ENCODE measurements at regions of chr3 and their contacts with region 1.

Region 1: GRCh38 chr3:62939707-62940106 is 64.5 kb upstream of the CADPS start:
- DNase-seq: no peak
- ATAC-seq: no peak
- H3K4me3 ChIP-seq: no peak overlapping the region
- H3K4me3 Mint-ChIP-seq: no peak overlapping the region
- H3K27ac ChIP-seq: no peak overlapping the region
- H3K27ac Mint-ChIP-seq: no peak overlapping the region
- H3K4me1 ChIP-seq: no peaks in the 10 kb centered on the region
- H3K4me1 Mint-ChIP-seq: no peaks in the 10 kb centered on the region
- H3K27me3 ChIP-seq: no peaks in the 10 kb centered on the region
- H3K27me3 Mint-ChIP-seq: no peaks in the 10 kb centered on the region
- CTCF ChIP-seq: no peak

Region 2: DNA sequence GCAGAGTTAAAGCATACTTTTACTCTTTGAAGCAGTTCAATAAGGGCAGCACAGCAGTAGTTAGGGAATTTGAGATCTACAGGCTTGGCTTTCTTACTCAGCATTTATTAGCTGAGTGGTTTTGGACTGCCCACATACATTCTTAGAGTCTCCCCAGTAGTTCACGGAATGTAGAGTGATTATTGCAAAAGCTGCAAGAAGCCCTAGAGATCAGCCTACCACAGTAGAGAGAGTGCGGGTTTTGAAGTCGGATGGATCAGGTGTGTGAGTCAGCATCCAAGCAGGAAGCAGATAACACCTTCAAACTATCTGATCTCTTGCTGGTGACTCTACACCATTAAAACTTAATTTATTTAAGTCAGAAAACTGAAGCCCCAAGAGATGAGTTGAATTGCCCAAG is 510.3 kb after region 1 on chr3:
- CTCF ChIA-PET with region 1: no interaction called
- POLR2A ChIA-PET with region 1: no interaction called
- intact Hi-C with region 1: loop called in 1 of 2 experiments (anchors 5 kb)
- DNase-seq: no peak
- ATAC-seq: no peak
- H3K4me3 ChIP-seq: no peak overlapping the region
- H3K4me3 Mint-ChIP-seq: no peak overlapping the region
- H3K27ac ChIP-seq: no peak overlapping the region
- H3K27ac Mint-ChIP-seq: no peak overlapping the region
- H3K4me1 ChIP-seq: no peaks in the 10 kb centered on the region
- H3K4me1 Mint-ChIP-seq: no peaks in the 10 kb centered on the region
- H3K27me3 ChIP-seq: no peaks in the 10 kb centered on the region
- H3K27me3 Mint-ChIP-seq: no peaks in the 10 kb centered on the region
- CTCF ChIP-seq: no peak

Region 3: DNA sequence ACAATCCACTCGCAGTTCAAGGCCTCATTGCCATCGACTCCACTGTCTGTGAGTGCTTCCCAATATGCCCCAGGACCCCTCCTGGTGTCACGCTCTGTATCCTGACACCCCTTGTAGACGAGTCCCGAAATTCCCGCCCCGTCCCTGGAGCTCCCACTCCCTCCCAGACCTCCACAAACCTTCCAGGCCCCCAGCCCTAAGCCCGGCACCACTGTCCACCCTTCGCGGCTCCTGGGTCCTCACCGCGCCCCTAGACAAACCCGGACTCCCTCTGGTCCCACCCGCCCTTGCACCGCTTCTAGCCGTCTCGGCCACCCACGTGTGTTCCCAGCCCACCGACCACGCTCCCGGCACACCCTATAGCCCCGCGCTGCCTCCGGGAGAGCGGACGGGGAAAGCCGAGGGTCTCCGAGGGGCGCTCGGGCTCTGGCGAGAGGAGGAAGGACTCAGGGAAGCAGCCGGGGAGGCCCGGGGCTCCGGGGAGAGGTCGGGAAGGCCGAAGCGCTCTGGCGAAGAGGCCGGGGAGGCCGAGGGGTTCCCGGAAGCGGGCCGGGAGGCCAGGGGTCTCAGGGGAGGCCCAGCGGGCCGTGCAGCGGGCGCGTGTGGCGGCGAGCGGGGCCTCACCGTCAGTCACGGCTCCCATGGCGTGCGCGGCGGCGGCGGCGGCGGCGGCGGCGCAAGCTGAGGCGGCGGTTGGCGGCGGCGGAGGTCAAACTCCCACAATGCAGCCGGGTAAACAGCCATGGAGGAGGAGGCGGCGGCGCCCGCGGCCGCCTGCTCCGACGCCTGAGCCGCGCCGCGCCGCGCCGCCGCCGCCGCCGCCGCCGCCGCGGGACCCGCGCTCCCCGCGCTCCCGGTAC is 923.7 kb after region 1 on chr3 and contains the starts of genes ATXN7 and THOC7:
- CTCF ChIA-PET with region 1: no interaction called
- POLR2A ChIA-PET with region 1: no interaction called
- intact Hi-C with region 1: no loop called
- DNase-seq: peak; percentile 45 to 85 (median 70)
- ATAC-seq: peak; percentile 75
- H3K4me3 ChIP-seq: peak within 1 kb of the TSS; percentile 71 to 89
- H3K4me3 Mint-ChIP-seq: peak within 1 kb of the TSS; percentile 94
- H3K27ac ChIP-seq: peak within 1 kb of the TSS; percentile 60 to 63
- H3K27ac Mint-ChIP-seq: peak within 1 kb of the TSS; percentile 93
- H3K4me1 ChIP-seq: peaks cover 19% of the 10 kb centered on the region
- H3K4me1 Mint-ChIP-seq: peaks cover 64% of the 10 kb centered on the region
- H3K27me3 ChIP-seq: no peaks in the 10 kb centered on the region
- H3K27me3 Mint-ChIP-seq: no peaks in the 10 kb centered on the region
- CTCF ChIP-seq: no peak
- total RNA-seq, gene ATXN7: 273 to 278 TPM
- total RNA-seq, gene THOC7: 23.0 to 25.5 TPM